ENCODE measurements at regions of chr10 and their contacts with region 1.

Region 1: GRCh38 chr10:103685880-103686669 is 169.3 kb downstream of the SH3PXD2A start:
- DNase-seq: peak; percentile 65
- H3K4me3 Mint-ChIP-seq: no peak overlapping the region
- H3K27ac Mint-ChIP-seq: no peak overlapping the region
- H3K4me1 Mint-ChIP-seq: peaks cover 3% of the 10 kb centered on the region
- H3K27me3 Mint-ChIP-seq: no peaks in the 10 kb centered on the region

Region 2: DNA sequence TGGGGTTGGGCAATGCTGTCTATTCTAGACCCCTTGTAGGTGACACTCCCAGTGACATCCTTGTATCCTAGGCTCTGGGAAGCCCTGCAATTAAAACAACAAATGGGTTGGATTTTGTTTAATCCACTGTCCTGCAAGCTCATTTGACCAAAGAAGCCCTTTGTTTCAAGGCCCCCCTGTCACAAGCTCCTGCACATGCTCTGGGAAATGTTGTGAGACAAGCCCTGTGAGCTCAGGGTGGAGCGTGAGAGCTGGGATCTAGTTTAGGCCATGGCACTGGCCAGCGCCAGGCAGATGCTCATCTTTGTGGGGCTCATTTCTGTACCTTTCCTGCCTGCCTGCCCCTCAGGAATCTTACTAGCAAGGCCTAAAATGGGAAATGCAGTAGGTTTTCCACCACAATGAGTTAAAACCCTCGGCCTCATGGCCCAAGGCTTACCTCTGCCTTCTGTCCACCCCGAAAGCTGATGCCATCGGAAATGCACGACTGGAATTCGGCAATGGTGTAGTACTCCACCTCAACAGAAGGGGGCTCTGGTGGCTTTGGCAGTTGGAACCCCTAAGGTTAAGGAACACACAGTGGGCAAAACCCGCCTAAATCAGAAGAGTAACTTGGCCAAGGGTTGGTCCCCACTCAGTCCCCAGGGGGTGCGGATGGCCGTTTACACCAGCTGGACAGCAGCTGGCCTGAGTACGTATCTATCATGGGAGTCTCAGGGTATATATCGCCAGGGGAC is 80.5 kb before region 1 on chr10:
- intact Hi-C with region 1: loop called (anchors 1 kb)
- DNase-seq: peak; percentile 19
- H3K4me3 Mint-ChIP-seq: no peak overlapping the region
- H3K27ac Mint-ChIP-seq: no peak overlapping the region
- H3K4me1 Mint-ChIP-seq: no peaks in the 10 kb centered on the region
- H3K27me3 Mint-ChIP-seq: no peaks in the 10 kb centered on the region